Activated CD8-positive, alpha-beta T cell treated with anti-CD3 and anti-CD28 coated beads for 36 hours (primary cell): ENCODE measurements at regions of chrX and their contacts with region 1.

Region 1: DNA sequence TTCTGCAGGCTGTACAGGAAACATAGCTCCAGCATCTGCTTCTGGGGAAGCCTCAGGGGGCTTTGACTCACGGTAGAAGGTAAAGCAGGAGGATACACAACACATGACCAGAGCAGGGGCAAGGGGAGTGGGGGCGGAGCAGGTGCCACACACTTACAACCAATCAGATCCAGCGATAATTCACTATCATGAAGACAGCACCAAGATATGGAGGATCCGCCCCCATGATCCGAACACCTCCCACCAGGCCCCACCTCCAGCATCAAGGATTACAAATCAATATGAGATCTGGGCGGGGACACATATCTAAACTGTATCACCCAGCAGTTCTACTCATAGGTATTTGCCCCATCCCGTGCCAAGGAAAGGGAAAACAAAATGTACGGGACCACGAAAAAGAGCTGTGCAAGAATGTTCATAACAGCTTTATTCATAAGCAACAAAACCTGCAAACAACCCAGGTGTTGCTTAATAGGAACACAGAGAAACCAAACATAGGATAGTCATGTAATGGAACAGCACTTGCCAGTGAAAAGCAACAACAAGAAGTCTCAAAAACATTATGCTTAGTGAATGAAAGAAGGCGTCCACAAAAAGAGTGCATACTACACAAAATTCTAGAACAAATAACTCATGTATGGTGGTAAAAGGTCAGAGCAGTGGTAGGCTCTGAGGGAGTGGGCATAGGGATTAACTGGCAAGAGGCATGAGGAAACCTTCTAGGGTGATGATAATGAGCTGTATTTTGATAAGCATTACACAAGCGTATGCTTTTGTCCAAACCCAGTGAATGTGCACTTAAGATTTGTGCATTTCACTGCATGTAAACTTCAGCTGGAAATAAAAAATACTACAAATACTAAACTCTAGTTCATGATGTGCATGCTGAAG is 130.9 kb upstream of the FAM9B start:
- DNase-seq: peak; percentile 9
- ATAC-seq: no peak
- H3K4me3 Mint-ChIP-seq: no peak overlapping the region
- H3K27ac Mint-ChIP-seq: peak overlapping the region; percentile 57
- H3K4me1 Mint-ChIP-seq: peaks cover 42% of the 10 kb centered on the region
- H3K27me3 Mint-ChIP-seq: no peaks in the 10 kb centered on the region
- CTCF ChIP-seq: no peak

Region 2: GRCh38 chrX:8851231-8851886 is 313.4 kb before region 1 on chrX:
- CTCF ChIA-PET with region 1: no interaction called
- POLR2A ChIA-PET with region 1: no interaction called
- intact Hi-C with region 1: no loop called
- DNase-seq: no peak
- ATAC-seq: no peak
- H3K4me3 Mint-ChIP-seq: no peak overlapping the region
- H3K27ac Mint-ChIP-seq: no peak overlapping the region
- H3K4me1 Mint-ChIP-seq: no peaks in the 10 kb centered on the region
- H3K27me3 Mint-ChIP-seq: peaks cover 12% of the 10 kb centered on the region
- CTCF ChIP-seq: no peak

Region 3: GRCh38 chrX:9352694-9353411 is 188.1 kb after region 1 on chrX:
- CTCF ChIA-PET with region 1: no interaction called
- POLR2A ChIA-PET with region 1: no interaction called
- intact Hi-C with region 1: loop called (anchors 5 kb)
- DNase-seq: peak; percentile 78
- ATAC-seq: peak; percentile 64
- H3K4me3 Mint-ChIP-seq: peak overlapping the region; percentile 40
- H3K27ac Mint-ChIP-seq: peak overlapping the region; percentile 83
- H3K4me1 Mint-ChIP-seq: peaks cover 33% of the 10 kb centered on the region
- H3K27me3 Mint-ChIP-seq: no peaks in the 10 kb centered on the region
- CTCF ChIP-seq: no peak